HEK293T (cell line): ENCODE measurements at regions of chr5 and their contacts with region 1.

Region 1: DNA sequence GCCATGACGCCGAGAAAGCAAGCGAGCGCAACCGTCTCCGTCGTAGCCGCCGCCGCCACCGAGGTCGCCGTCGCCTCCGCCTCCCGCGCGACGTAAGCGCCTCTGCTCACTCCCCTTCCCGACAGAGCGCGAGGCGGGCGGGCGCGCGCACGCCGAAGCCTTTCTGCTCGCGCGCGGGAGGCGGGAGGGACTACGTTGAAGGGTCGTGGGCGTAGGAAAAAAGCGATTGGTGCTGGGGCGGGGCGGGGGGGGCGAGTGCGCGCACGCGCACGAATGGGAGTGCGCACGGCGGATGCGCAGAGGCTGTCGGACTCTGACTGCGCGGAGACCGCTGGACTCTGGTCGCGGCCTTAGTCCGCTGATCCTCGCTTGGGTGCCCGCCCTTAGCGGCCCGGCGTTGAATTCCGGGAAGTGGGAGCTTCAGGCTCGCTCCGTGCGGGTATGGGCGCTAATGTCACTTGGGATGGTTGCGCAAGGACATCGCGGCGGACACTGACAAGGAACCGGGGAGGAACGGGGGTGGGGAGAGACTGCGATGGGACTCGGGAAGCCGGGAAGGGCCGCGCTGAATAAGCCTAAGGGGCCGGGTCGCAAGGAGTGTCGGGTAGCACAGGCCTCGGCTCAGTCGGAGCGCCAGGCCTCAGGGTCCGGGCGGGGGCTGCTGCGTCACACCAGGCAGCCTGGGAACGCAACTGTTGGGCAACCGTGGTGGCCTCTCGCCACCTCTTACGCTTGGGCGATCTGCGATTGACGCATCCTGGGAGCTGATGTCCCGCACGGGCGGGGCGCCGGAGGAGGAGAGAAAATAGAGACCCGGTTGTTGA is at the start of gene CHD1:
- DNase-seq: peak; percentile 86

Region 2: GRCh38 chr5:98721231-98721928 is 207.7 kb before region 1 on chr5:
- CTCF ChIA-PET with region 1: no interaction called
- POLR2A ChIA-PET with region 1: no interaction called
- DNase-seq: no peak

Region 3: GRCh38 chr5:98839469-98840383 is 89.4 kb before region 1 on chr5:
- CTCF ChIA-PET with region 1: no interaction called
- POLR2A ChIA-PET with region 1: no interaction called
- DNase-seq: no peak

Region 4: DNA sequence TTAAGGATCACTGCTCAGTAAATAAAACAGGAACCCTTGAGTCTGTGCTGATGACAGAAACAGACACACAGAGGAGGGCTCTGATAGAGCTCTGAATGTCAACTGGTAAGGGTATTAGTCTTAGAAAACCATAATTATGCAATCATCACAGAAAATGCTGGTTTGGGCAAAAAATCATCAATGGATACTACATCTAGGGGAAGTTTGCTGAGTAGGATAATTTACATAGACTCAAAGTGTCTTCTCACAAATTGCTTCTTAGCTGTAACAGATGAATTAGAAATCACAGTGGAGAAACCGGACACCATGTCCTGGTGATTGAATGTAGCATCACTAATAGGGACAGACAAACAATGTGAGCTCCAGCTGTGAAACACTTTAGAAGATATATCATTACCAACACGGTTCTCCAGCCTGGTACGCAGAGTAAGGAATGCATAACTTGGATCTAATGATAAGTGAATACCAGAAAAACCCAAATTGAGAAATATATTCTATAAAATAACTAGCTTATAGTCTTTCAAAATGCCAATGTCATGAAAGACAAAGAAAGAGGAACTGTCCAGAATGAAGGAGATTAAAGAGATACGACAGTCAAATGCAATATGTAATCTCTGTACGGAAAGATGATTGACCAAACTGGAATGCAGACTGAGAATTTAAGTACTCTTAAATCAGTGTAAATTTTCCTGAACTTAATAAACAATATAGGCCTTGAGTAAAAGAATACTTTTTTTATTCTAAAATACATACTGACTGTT is 17.6 kb before region 1 on chr5:
- CTCF ChIA-PET with region 1: interaction called, 3 read pairs
- POLR2A ChIA-PET with region 1: interaction called, 15 read pairs
- DNase-seq: no peak

Region 5: DNA sequence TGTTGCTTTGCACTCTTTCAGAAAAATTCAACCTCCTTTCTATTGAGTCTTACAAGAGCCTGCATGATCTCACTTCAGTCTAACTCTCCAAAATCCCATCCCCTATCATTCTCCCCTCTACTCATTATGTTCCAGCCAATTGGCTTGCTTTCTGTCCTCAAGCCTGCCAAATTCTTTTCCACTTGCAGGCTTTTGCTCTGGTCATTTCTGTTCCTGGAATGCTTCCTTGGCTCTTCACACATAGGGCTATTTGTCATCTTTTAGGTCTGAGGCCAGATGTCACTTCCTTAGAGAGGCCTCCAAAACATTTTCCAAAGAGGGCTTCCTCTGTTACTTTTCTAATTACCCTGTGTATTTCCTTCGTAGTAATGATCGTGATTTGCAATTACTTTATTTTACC is 11.5 kb after region 1 on chr5:
- CTCF ChIA-PET with region 1: interaction called, 3 read pairs
- POLR2A ChIA-PET with region 1: interaction called, 23 read pairs
- DNase-seq: no peak

Region 6: GRCh38 chr5:99019812-99020697 is 91.0 kb after region 1 on chr5:
- CTCF ChIA-PET with region 1: no interaction called
- POLR2A ChIA-PET with region 1: interaction called, 17 read pairs
- DNase-seq: peak; percentile 50

Region 7: GRCh38 chr5:99025298-99026045 is 96.4 kb after region 1 on chr5:
- CTCF ChIA-PET with region 1: no interaction called
- POLR2A ChIA-PET with region 1: interaction called, 17 read pairs
- DNase-seq: no peak